Activated CD4-positive, alpha-beta T cell treated with anti-CD3 and anti-CD28 coated beads, Interleukin-2, amount 10 ng/mL, durations not matched to agents 24 days and 14 days (primary cell): ENCODE measurements at regions of chr6 and their contacts with region 1.

Region 1: DNA sequence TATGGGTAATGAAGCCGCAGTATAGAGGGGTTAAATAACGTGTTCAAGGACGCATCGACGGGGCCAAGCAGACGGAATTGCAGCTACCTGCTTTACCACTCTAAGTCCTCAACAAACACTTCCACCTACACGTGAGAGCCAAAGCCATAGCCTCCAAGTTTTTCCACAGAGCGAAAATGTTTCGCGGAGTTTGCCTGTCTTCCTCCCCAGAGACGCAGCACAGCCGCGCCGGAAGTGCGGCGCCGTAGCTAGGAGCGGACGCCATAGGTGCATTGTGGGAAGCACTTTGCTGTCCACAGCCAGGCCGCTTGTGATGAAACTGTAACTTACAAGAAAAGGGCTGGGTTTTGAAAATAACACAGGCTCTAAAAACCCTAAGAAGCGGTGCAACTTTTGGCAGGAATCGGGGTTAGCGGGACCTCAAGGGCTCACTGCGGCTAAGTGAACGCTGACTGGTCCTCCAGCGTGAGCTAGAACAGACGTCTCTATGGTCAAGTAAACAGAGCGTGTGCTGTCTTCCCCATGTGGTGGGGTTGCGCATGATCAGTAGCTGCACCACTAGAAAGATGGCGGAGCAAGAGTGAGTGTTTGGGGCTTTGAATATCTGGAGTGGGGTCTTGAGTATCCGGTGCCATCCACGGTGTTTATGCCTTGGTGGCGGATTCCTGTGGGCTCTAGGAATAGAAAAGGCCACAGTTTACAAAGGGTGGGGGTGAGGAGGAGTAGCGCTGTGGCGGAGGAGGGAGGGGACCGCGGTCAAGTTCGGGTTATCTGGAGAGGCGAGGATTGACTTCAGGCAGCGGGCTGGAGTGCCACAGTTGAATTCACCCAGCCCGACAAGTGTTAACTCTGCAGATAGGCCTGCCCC is at the start of gene RPL7L1:
- DNase-seq: peak; percentile 95
- H3K4me3 Mint-ChIP-seq: peak within 1 kb of the TSS; percentile 97
- H3K27ac Mint-ChIP-seq: peak within 1 kb of the TSS; percentile 100
- H3K4me1 Mint-ChIP-seq: peaks cover 17% of the 10 kb centered on the region
- H3K27me3 Mint-ChIP-seq: no peaks in the 10 kb centered on the region
- total RNA-seq, gene RPL7L1: 182 and 189 TPM in 2 replicates

Region 2: DNA sequence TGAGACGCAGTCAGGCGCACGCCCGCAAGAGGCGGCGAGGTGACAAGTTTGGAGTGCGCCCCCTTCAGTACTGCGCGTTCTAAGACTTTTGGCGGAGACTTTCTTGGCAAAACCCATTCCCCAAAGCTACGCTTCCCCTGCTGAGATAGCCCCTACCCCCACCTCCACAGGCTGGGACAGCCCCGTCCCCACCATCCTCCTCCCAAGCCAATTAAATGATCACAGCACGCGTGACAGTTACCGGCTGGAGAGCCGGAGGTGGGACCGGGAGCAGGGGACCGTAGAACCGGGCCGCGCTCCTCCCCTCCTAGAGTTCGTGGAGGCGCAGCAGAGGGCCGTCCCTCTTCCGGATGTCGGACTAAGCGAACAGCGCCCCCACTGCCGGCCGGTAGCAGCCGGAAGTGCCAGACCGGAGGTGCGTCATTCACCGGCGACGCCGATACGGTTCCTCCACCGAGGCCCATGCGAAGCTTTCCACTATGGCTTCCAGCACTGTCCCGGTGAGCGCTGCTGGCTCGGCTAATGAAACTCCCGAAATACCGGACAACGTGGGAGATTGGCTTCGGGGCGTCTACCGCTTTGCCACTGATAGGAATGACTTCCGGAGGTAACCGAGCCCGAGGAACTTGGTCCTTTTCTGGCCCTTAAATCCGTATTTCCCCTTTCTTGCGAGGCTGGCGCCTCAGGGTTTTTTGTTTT is 1092.2 kb before region 1 on chr6 and contains the start of gene TOMM6:
- intact Hi-C with region 1: loop called (anchors 1 kb)
- DNase-seq: peak; percentile 99
- H3K4me3 Mint-ChIP-seq: peak within 1 kb of the TSS; percentile 95
- H3K27ac Mint-ChIP-seq: peak within 1 kb of the TSS; percentile 98
- H3K4me1 Mint-ChIP-seq: peaks cover 12% of the 10 kb centered on the region
- H3K27me3 Mint-ChIP-seq: peaks cover 12% of the 10 kb centered on the region
- total RNA-seq, gene TOMM6: 367 and 376 TPM in 2 replicates

Region 3: DNA sequence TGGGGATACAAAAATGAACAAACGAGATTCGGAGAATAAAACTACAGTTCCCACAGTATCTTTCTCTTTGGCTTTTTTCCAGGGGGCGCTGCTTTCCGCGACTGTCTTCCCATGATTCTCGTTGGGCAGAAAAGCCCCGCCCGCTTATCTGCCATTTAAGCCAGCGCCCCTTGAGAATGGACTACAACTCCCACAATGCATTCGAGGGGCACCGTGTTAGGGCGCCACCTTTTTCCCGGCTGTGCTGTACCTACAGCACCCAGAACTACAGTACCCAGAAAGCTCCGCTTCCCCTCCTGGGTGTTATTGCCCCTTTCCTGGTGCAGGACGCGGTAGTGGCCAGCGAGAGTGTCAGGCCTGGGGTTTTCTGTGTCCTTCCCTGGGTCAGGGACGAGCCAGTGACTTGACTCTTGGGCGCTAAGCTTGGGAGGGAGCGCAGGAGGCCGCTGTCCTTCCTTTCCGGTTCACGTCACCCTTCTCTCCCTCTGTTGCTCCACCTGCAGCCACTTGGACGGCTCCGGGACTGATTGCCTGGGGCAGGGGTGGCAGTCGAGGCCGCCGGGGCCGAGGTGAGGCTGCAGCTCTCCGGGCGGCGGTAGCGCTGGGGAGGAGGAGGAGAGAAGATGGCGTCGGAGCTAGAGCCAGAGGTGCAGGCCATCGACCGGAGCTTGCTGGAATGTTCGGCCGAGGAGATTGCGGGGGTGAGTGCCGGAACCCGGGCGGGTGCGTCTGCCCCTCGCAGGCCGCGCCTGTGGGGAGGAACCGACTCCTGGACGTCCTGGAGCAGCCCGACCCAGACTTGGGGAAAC is 315.7 kb before region 1 on chr6 and contains the start of gene UBR2:
- intact Hi-C with region 1: loop called (anchors 5 kb)
- DNase-seq: peak; percentile 98
- H3K4me3 Mint-ChIP-seq: peak within 1 kb of the TSS; percentile 99
- H3K27ac Mint-ChIP-seq: peak within 1 kb of the TSS; percentile 93
- H3K4me1 Mint-ChIP-seq: peaks cover 25% of the 10 kb centered on the region
- H3K27me3 Mint-ChIP-seq: peaks cover 2% of the 10 kb centered on the region
- total RNA-seq, gene UBR2: 30.1 and 30.8 TPM in 2 replicates

Region 4: GRCh38 chr6:42726485-42727086 is 153.0 kb before region 1 on chr6:
- intact Hi-C with region 1: loop called (anchors 1 kb)
- DNase-seq: peak; percentile 91
- H3K4me3 Mint-ChIP-seq: peak overlapping the region; percentile 84
- H3K27ac Mint-ChIP-seq: peak overlapping the region; percentile 97
- H3K4me1 Mint-ChIP-seq: peaks cover 14% of the 10 kb centered on the region
- H3K27me3 Mint-ChIP-seq: no peaks in the 10 kb centered on the region

Region 5: GRCh38 chr6:42782622-42783176 is 96.9 kb before region 1 on chr6:
- intact Hi-C with region 1: loop called (anchors 1 kb)
- DNase-seq: peak; percentile 88
- H3K4me3 Mint-ChIP-seq: peak overlapping the region; percentile 87
- H3K27ac Mint-ChIP-seq: peak overlapping the region; percentile 96
- H3K4me1 Mint-ChIP-seq: peaks cover 29% of the 10 kb centered on the region
- H3K27me3 Mint-ChIP-seq: no peaks in the 10 kb centered on the region

Region 6: DNA sequence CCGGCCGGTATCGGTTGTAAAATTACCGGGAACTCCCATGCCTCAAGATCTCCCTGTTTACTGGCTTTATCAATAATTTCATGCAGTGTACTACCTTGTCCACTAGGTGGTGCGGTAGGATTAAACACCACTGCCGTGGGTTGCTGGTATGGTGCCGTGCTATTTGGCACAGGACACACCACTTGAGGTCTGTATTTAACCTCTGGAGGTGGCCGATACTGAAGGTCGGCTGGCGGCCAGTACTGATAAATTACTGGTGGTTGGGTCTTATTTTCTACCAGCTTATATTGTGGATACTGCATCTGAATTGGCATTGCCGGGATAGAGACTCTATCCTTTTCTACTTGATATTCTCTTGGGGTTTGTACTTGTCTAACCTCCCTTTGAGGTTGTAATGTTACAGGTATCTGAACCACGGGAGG is 21.9 kb after region 1 on chr6:
- intact Hi-C with region 1: loop called (anchors 2 kb)
- DNase-seq: peak; percentile 93
- H3K4me3 Mint-ChIP-seq: peak overlapping the region; percentile 4
- H3K27ac Mint-ChIP-seq: no peak overlapping the region
- H3K4me1 Mint-ChIP-seq: peaks cover 17% of the 10 kb centered on the region
- H3K27me3 Mint-ChIP-seq: peaks cover 2% of the 10 kb centered on the region